Activated CD4-positive, alpha-beta T cell treated with anti-CD3 and anti-CD28 coated beads, Interleukin-2, amount 10 ng/mL, durations not matched to agents 24 days and 14 days (primary cell): ENCODE measurements at regions of chr4 and their contacts with region 1.

Region 1: DNA sequence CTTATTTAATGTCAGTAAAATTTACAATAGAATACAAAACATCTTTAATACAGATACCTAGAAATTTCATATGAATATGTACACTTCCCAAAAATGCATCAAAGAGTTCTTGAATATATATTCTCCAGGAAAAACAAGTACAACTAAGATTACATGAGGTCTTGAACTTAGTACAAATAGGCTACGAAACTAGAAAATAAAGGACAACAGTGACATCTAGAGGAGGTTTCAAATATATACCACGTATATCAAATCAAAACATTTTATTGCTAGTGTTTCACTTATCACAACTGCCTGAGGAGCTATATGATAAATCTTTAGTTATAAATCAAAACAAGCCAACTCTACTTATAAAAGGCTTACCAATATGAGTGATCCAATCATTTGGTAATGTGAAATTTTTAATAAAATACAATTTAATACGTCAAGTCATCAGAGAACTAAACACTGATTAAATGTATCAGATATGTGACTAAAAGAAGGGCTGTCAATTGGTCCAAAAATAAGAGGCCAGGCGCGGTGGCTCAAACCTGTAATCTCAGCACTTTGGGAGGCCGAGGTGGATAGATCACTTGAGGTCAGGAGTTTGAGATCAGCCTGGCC is 36.6 kb downstream of the ANAPC10 start:
- DNase-seq: no peak
- H3K4me3 Mint-ChIP-seq: no peak overlapping the region
- H3K27ac Mint-ChIP-seq: no peak overlapping the region
- H3K4me1 Mint-ChIP-seq: peaks cover 20% of the 10 kb centered on the region
- H3K27me3 Mint-ChIP-seq: no peaks in the 10 kb centered on the region

Region 2: DNA sequence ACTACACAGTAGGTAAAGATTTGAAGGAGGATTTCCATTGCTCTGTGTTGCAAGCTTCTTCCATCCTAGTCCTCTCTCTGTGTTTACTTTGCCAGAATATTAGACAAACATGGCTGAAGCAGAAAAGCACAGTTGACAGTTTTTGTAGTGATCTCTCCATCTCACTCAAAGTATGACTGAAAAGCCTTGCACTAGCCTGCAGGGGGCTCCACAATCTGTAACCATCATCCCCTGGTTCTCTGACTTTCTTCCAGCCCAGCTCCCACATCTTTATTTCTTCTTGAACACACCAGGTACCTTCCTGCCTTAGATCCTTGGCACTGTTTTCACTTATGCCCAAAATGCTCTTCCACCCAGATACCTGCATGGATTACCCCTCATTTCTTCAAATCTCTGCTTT is 449.6 kb before region 1 on chr4:
- intact Hi-C with region 1: loop called (anchors 5 kb)
- DNase-seq: no peak
- H3K4me3 Mint-ChIP-seq: no peak overlapping the region
- H3K27ac Mint-ChIP-seq: no peak overlapping the region
- H3K4me1 Mint-ChIP-seq: no peaks in the 10 kb centered on the region
- H3K27me3 Mint-ChIP-seq: peaks cover 2% of the 10 kb centered on the region

Region 3: GRCh38 chr4:144645631-144646522 is 415.5 kb before region 1 on chr4 and contains the start of gene HHIP:
- intact Hi-C with region 1: loop called (anchors 10 kb)
- DNase-seq: peak; percentile 77
- H3K4me3 Mint-ChIP-seq: peak within 1 kb of the TSS; percentile 88
- H3K27ac Mint-ChIP-seq: no peak within 1 kb of the TSS
- H3K4me1 Mint-ChIP-seq: peaks cover 17% of the 10 kb centered on the region
- H3K27me3 Mint-ChIP-seq: peaks cover 57% of the 10 kb centered on the region
- total RNA-seq, gene HHIP: not detected in 2 replicates

Region 4: GRCh38 chr4:144734522-144734921 is 326.9 kb before region 1 on chr4:
- intact Hi-C with region 1: no loop called
- DNase-seq: no peak
- H3K4me3 Mint-ChIP-seq: no peak overlapping the region
- H3K27ac Mint-ChIP-seq: no peak overlapping the region
- H3K4me1 Mint-ChIP-seq: no peaks in the 10 kb centered on the region
- H3K27me3 Mint-ChIP-seq: no peaks in the 10 kb centered on the region

Region 5: DNA sequence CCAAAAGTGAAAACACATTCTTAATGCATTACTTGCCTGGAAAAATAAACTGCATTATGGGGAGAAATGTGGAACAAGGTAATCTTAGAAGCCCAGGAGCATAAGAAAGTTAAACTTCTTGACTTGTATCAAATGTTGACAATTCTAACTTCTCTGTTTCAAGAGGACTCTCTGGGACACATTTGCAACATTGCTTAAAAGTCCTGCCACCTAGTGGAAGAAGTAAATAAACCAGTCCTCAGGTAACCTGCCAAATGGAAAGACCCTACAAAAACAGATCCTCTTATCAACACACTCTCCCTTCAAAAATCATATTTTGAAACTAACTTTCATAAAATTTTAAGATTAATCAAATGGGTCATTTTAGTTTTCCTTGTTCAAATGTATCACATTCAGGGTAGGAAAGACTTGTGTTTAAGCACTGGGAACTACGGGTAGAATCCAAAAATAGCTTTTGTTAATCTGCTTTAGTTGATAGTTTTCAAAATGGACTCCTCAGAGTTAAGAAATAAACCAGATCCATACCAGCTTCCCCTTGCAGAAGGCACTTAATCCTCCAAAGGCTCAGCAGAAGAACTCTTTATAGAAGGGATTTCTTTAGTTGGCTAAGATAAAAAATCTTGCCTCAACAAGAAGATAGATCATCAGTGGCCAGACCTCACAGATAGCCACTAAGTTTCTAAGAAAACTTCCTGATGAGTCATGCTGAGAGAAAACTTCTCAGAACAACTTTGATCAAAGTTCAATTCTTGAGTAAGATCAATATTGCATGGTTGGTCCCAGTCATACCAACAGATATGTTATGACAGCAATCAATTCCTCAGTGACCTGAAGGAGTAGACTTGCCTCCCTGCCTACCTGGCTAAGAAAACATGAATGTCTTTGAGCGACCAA is 273.8 kb before region 1 on chr4:
- intact Hi-C with region 1: loop called (anchors 5 kb)
- DNase-seq: no peak
- H3K4me3 Mint-ChIP-seq: no peak overlapping the region
- H3K27ac Mint-ChIP-seq: no peak overlapping the region
- H3K4me1 Mint-ChIP-seq: no peaks in the 10 kb centered on the region
- H3K27me3 Mint-ChIP-seq: peaks cover 4% of the 10 kb centered on the region

Region 6: DNA sequence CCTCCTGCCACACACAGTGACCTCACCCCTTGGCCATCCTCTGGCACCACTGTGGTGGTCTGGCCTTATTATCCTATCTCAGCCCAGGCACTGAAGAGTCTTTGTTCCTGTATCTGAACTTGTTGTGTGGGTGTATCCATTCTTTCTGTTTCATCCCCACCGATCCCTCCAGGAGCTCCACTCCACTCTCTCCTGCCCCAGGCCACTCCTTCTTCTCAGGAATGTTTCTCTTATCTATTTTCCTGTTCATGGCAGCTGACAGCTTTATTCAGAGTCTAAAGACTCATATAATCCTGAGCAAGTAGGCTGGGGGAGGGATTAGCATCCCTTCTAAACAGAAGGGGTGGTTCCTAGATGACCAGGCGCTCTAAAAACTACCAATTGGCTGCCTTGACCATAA is 113.4 kb before region 1 on chr4:
- intact Hi-C with region 1: no loop called
- DNase-seq: no peak
- H3K4me3 Mint-ChIP-seq: no peak overlapping the region
- H3K27ac Mint-ChIP-seq: no peak overlapping the region
- H3K4me1 Mint-ChIP-seq: no peaks in the 10 kb centered on the region
- H3K27me3 Mint-ChIP-seq: no peaks in the 10 kb centered on the region